ENCODE measurements at regions of chr5 and their contacts with region 1.

Region 1: DNA sequence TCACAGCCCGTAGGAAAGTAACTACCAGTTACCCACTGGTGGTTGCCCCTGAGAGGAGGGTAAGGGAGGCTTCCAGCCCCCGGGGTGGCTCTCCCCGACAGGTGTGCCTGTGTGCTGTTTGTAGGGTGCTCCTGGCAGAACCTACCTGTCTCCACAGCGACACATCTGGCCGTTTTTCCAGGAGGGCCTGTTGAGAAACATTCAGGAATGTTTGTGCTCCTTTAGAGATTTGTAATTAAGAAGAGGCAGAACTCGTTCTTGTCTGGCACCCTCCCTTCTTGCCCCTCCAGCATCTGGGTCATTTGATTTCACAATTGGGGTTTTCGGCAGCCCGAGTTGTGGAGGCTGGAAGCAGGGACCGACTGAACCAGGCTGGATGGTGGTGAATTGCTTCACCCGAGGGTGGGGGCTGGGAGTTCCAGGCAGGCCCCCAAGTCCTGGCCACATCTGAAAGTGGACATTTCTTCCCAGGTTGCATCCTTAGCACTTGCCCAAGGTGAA is 74.2 kb downstream of the WWC1 start:
- DNase-seq: peak; percentile 88 to 98
- H3K4me3 ChIP-seq: peak overlapping the region; percentile 38; the same call in 1 of the 2 replicates
- H3K27ac ChIP-seq: peak overlapping the region; percentile 97
- H3K4me1 ChIP-seq: peaks cover 76% of the 10 kb centered on the region
- H3K27me3 ChIP-seq: no peaks in the 10 kb centered on the region
- CTCF ChIP-seq: peak; percentile 69

Region 2: DNA sequence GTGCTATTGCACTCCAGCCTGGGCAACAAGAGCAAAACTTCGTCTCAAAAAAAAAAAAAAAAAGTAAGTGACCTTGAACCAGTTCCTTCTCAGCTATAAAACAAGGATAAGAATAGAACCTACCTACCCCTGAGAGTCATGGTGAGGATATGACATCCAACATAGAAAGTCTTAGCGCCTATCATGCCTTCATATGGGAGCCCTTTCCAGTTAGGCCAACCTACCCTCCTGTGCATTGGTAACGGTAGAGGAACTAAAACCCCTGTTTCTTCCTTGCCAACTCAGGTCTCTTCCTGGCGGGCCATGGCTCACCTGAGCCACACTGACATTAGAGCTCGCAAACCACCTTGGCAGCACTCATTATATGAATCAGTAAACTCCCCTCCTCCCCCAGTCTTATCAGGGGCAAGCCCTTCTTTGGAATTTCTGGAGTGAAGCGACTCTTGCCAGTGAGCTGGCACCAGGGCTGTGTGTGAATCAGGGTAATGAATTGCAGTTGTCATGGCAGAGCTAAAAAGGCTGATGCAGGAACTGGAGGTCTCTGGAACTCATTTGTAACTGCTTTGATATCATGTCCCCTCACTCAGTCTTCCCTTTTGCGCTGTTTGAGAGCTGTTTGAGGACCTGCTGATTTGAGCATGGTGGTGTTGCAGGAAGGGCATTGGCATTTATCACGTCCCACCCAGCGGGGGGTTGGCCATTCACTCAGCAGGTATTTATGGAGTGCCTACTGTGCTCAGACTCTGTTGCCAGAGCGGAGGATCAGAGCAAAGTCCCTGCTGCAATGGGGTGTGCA is 63.8 kb before region 1 on chr5:
- CTCF ChIA-PET with region 1: no interaction called
- POLR2A ChIA-PET with region 1: interaction called, 11 read pairs
- intact Hi-C with region 1: no loop called
- DNase-seq: peak; percentile 84 to 97
- H3K4me3 ChIP-seq: no peak overlapping the region
- H3K27ac ChIP-seq: peak overlapping the region; percentile 63
- H3K4me1 ChIP-seq: peaks cover 61% of the 10 kb centered on the region
- H3K27me3 ChIP-seq: no peaks in the 10 kb centered on the region
- CTCF ChIP-seq: no peak

Region 3: GRCh38 chr5:168328814-168329213 is 36.8 kb before region 1 on chr5:
- CTCF ChIA-PET with region 1: interaction called, 9 read pairs
- POLR2A ChIA-PET with region 1: interaction called, 6 read pairs
- intact Hi-C with region 1: loop called (anchors 1 kb)
- DNase-seq: peak in 1 of 2 experiments; percentile 65
- H3K4me3 ChIP-seq: peak overlapping the region; percentile 39; the same call in 1 of the 2 replicates
- H3K27ac ChIP-seq: peak overlapping the region; percentile 78
- H3K4me1 ChIP-seq: peaks cover 99% of the 10 kb centered on the region
- H3K27me3 ChIP-seq: no peaks in the 10 kb centered on the region
- CTCF ChIP-seq: no peak

Region 4: GRCh38 chr5:168334695-168335094 is 30.9 kb before region 1 on chr5:
- CTCF ChIA-PET with region 1: interaction called, 4 read pairs
- POLR2A ChIA-PET with region 1: interaction called, 7 read pairs
- intact Hi-C with region 1: loop called (anchors 1 kb)
- DNase-seq: peak; percentile 92 to 96
- H3K4me3 ChIP-seq: no peak overlapping the region
- H3K27ac ChIP-seq: peak overlapping the region; percentile 62
- H3K4me1 ChIP-seq: peaks cover 75% of the 10 kb centered on the region
- H3K27me3 ChIP-seq: no peaks in the 10 kb centered on the region
- CTCF ChIP-seq: no peak

Region 5: GRCh38 chr5:168346441-168346840 is 19.2 kb before region 1 on chr5:
- CTCF ChIA-PET with region 1: interaction called, 3 read pairs
- POLR2A ChIA-PET with region 1: interaction called, 5 read pairs
- intact Hi-C with region 1: loop called (anchors 1 kb)
- DNase-seq: peak; percentile 68 to 96
- H3K4me3 ChIP-seq: peak overlapping the region; percentile 27; the same call in 1 of the 2 replicates
- H3K27ac ChIP-seq: peak overlapping the region; percentile 71
- H3K4me1 ChIP-seq: peaks cover 83% of the 10 kb centered on the region
- H3K27me3 ChIP-seq: no peaks in the 10 kb centered on the region
- CTCF ChIP-seq: no peak

Region 6: DNA sequence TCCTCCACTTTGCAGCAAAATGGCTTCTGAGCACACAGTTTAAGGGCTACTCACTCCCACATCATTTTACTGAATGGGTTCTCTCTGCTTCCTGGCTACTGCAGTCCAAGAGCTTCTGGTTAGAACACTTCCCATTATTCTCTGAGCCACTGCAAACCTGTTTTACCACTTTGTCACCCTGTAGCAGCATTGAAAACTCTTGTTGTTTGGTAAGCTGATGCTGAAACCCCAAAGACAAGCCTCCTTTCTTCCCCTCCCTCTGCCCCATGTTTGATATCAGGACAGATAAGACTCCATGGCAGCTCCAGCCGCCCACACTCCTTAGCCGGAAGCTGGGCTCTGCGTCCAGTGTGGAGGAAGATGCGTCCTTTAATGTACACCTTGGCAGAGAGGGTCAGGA is 36.3 kb after region 1 on chr5:
- CTCF ChIA-PET with region 1: interaction called, 5 read pairs
- POLR2A ChIA-PET with region 1: interaction called, 3 read pairs
- intact Hi-C with region 1: loop called (anchors 1 kb)
- DNase-seq: peak; percentile 79 to 97
- H3K4me3 ChIP-seq: no peak overlapping the region
- H3K27ac ChIP-seq: peak overlapping the region; percentile 90
- H3K4me1 ChIP-seq: peaks cover 44% of the 10 kb centered on the region
- H3K27me3 ChIP-seq: no peaks in the 10 kb centered on the region
- CTCF ChIP-seq: no peak

Region 7: GRCh38 chr5:168409580-168410458 is 44.2 kb after region 1 on chr5:
- CTCF ChIA-PET with region 1: no interaction called
- POLR2A ChIA-PET with region 1: no interaction called
- intact Hi-C with region 1: loop called (anchors 2 kb)
- DNase-seq: peak; percentile 47
- H3K4me3 ChIP-seq: no peak overlapping the region
- H3K27ac ChIP-seq: peak overlapping the region; percentile 61
- H3K4me1 ChIP-seq: peaks cover 25% of the 10 kb centered on the region
- H3K27me3 ChIP-seq: no peaks in the 10 kb centered on the region
- CTCF ChIP-seq: no peak

Measured in PC-9 (cell line).